ENCODE measurements at regions of chr1 and their contacts with region 1.

Region 1: GRCh38 chr1:166910396-166910994 is 34.4 kb upstream of the TADA1 start:
- DNase-seq: peak; percentile 87
- ATAC-seq: peak; percentile 96
- H3K4me3 Mint-ChIP-seq: no peak overlapping the region
- H3K27ac Mint-ChIP-seq: no peak overlapping the region
- H3K4me1 Mint-ChIP-seq: peaks cover 13% of the 10 kb centered on the region
- H3K27me3 Mint-ChIP-seq: no peaks in the 10 kb centered on the region

Region 2: GRCh38 chr1:166884040-166884642 is 26.4 kb before region 1 on chr1:
- CTCF ChIA-PET with region 1: interaction called, 27 read pairs
- POLR2A ChIA-PET with region 1: no interaction called
- intact Hi-C with region 1: loop called in 1 of 2 experiments (anchors 1 kb)
- DNase-seq: peak; percentile 72
- ATAC-seq: peak; percentile 89
- H3K4me3 Mint-ChIP-seq: no peak overlapping the region
- H3K27ac Mint-ChIP-seq: no peak overlapping the region
- H3K4me1 Mint-ChIP-seq: peaks cover 18% of the 10 kb centered on the region
- H3K27me3 Mint-ChIP-seq: peaks cover 16% of the 10 kb centered on the region

Region 3: GRCh38 chr1:166975361-166976129 is 65.0 kb after region 1 on chr1 and contains the start of gene ILDR2:
- CTCF ChIA-PET with region 1: interaction called, 14 read pairs
- POLR2A ChIA-PET with region 1: no interaction called
- intact Hi-C with region 1: loop called (anchors 1 to 2 kb)
- DNase-seq: peak; percentile 87
- ATAC-seq: peak; percentile 60
- H3K4me3 Mint-ChIP-seq: peak within 1 kb of the TSS; percentile 93
- H3K27ac Mint-ChIP-seq: peak within 1 kb of the TSS; percentile 99
- H3K4me1 Mint-ChIP-seq: peaks cover 51% of the 10 kb centered on the region
- H3K27me3 Mint-ChIP-seq: peaks cover 21% of the 10 kb centered on the region
- total RNA-seq, gene ILDR2: 9.1 to 14.6 TPM

Region 4: GRCh38 chr1:167052389-167052788 is 141.9 kb after region 1 on chr1:
- CTCF ChIA-PET with region 1: interaction called, 541 read pairs
- POLR2A ChIA-PET with region 1: interaction called, 3 read pairs
- intact Hi-C with region 1: no loop called
- DNase-seq: no peak
- ATAC-seq: no peak
- H3K4me3 Mint-ChIP-seq: no peak overlapping the region
- H3K27ac Mint-ChIP-seq: no peak overlapping the region
- H3K4me1 Mint-ChIP-seq: no peaks in the 10 kb centered on the region
- H3K27me3 Mint-ChIP-seq: no peaks in the 10 kb centered on the region

Region 5: DNA sequence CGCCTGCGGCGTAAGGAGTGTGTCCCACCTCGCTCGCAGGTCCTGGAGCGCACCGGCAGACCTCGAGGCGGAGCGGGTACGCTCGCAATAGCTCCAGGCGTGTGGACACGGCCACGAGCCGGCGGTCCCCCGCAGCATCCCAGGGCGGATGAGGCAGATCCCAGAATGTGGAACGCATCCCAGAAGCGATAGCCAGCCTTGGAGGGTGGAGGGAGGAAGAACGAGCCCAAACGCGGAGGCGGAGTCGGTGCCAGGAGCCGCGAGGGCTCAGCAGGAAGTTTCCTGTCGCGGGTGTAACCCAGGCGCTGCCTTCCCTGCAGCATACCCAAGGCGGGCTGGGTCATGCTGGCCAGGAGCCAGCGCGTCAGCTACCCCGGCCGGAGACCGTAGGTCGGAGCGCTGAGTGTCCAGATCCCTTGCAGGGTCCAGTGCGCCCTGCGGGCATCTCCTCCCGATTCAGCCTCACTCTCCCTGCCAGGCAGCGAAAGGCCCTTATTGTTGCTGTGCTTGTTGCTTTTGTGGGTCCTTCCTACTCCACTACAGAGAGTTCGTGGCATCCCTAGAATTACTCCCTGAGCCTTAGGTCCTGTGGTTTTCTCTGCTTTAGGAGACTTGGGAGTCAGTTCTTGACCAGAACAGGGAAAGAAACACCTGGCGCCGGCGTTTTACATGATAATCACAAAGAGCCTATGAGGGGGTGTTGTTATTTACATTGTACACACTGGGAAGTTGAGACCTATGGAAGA is 211.1 kb after region 1 on chr1:
- CTCF ChIA-PET with region 1: interaction called, 3 read pairs
- POLR2A ChIA-PET with region 1: no interaction called
- intact Hi-C with region 1: loop called (anchors 5 kb)
- DNase-seq: peak; percentile 56
- ATAC-seq: peak; percentile 64
- H3K4me3 Mint-ChIP-seq: peak overlapping the region; percentile 65
- H3K27ac Mint-ChIP-seq: peak overlapping the region; percentile 66
- H3K4me1 Mint-ChIP-seq: no peaks in the 10 kb centered on the region
- H3K27me3 Mint-ChIP-seq: no peaks in the 10 kb centered on the region